Activated naive CD4-positive, alpha-beta T cell treated with anti-CD3 and anti-CD28 coated beads for 36 hours (primary cell): ENCODE measurements at regions of chr5 and their contacts with region 1.

Region 1: DNA sequence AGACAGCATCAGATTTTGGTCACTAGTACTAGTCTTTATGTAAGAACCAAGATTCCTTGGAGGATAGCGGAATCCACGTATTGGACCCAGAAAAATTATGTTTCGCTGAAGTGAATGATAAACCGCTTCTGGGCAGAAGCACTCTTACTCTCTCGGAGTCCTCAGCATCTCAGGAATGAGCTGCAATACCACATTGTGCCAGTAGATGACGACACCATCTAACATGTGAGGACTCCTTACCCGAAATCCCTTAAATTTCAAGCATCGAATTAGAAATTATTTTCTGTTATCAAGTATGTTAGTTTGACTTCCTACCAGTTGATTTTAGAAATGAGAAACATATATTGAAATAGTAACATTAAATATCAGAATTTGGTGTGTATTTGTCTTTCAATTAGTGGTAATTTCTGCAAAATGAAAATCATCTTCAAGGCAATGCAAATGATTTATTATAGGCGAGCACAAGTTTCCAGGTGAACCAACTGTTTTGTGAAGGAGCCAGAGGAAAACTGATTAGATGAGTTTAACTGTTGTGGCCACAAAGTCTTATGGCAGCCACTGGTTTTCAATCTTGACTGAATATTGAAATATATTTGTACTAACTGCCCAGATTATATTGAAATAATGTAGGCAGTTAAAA is 66.0 kb upstream of the CAMK4 start:
- DNase-seq: peak; percentile 93
- H3K4me3 Mint-ChIP-seq: no peak overlapping the region
- H3K27ac Mint-ChIP-seq: no peak overlapping the region
- H3K4me1 Mint-ChIP-seq: peaks cover 7% of the 10 kb centered on the region
- H3K27me3 Mint-ChIP-seq: no peaks in the 10 kb centered on the region

Region 2: DNA sequence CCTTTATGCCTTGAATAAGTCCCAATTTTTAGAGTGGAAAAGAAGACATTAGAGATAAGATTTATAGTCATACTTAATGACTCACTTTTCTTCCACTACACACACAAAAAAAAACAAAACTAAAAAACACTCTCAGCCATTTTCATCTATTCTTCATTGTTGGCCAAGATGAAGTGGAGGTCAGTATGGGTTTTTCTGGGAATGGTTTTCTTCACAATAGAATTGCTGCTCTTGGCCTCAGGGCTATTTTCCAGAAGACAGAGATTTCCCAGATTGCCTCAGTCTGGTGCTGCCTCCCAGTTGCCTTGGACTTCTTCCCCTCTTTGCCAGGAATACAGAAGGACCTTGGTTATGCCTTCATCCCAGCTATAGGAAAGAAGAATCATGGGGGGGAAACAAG is 895.5 kb before region 1 on chr5:
- CTCF ChIA-PET with region 1: no interaction called
- intact Hi-C with region 1: no loop called
- DNase-seq: no peak
- H3K4me3 Mint-ChIP-seq: no peak overlapping the region
- H3K27ac Mint-ChIP-seq: no peak overlapping the region
- H3K4me1 Mint-ChIP-seq: no peaks in the 10 kb centered on the region
- H3K27me3 Mint-ChIP-seq: no peaks in the 10 kb centered on the region

Region 3: DNA sequence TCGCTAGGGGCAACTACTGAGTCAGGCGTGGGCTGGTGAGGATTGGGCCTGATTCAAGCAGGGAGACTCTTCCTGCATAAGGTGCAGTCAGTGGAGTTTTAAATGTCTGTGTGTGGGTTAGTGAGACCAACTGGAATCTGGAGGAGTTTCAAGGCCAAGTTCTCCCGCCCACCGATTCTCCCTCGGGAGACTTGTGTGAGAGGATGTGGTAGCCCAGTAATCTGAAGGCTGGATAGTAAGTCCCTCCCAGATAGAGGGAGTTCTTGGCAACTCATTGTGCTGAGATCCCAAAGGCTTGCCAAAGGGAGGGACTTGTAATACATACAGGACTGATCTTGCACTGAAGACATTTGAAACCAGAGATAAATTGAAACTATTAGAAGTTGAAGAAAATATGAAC is 14.3 kb before region 1 on chr5:
- CTCF ChIA-PET with region 1: no interaction called
- intact Hi-C with region 1: no loop called
- DNase-seq: no peak
- H3K4me3 Mint-ChIP-seq: no peak overlapping the region
- H3K27ac Mint-ChIP-seq: no peak overlapping the region
- H3K4me1 Mint-ChIP-seq: peaks cover 6% of the 10 kb centered on the region
- H3K27me3 Mint-ChIP-seq: no peaks in the 10 kb centered on the region

Region 4: DNA sequence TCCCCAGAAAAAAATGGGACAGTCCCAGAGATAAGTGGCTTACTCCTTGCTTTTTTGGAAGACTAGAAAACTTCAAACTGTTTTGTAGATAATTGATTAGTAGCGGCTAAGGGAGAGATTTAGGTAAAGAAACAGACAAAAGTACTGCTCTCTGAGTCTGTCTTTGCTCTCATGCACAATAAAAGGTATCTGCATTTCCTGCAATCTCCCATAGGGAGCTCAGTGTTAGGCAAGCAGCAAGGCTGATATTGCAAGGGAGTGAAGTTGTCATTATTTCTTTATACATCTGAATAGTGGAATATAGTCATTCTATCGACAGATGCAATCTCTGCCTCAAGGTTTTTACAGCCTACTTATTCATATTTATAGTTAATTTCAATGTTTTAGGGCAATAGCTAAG is 11.0 kb after region 1 on chr5:
- CTCF ChIA-PET with region 1: interaction called, 18 read pairs
- intact Hi-C with region 1: no loop called
- DNase-seq: no peak
- H3K4me3 Mint-ChIP-seq: no peak overlapping the region
- H3K27ac Mint-ChIP-seq: no peak overlapping the region
- H3K4me1 Mint-ChIP-seq: peaks cover 3% of the 10 kb centered on the region
- H3K27me3 Mint-ChIP-seq: no peaks in the 10 kb centered on the region

Region 5: GRCh38 chr5:111223889-111224563 is 65.8 kb after region 1 on chr5 and contains the start of gene CAMK4:
- CTCF ChIA-PET with region 1: interaction called, 40 read pairs
- intact Hi-C with region 1: loop called (anchors 5 kb)
- DNase-seq: peak; percentile 75
- H3K4me3 Mint-ChIP-seq: peak within 1 kb of the TSS; percentile 95
- H3K27ac Mint-ChIP-seq: peak within 1 kb of the TSS; percentile 97
- H3K4me1 Mint-ChIP-seq: peaks cover 25% of the 10 kb centered on the region
- H3K27me3 Mint-ChIP-seq: no peaks in the 10 kb centered on the region
- total RNA-seq, gene CAMK4: 40.6 to 44.4 TPM

Region 6: GRCh38 chr5:111320953-111321352 is 162.7 kb after region 1 on chr5:
- CTCF ChIA-PET with region 1: no interaction called
- intact Hi-C with region 1: no loop called
- DNase-seq: no peak
- H3K4me3 Mint-ChIP-seq: no peak overlapping the region
- H3K27ac Mint-ChIP-seq: no peak overlapping the region
- H3K4me1 Mint-ChIP-seq: peaks cover 53% of the 10 kb centered on the region
- H3K27me3 Mint-ChIP-seq: no peaks in the 10 kb centered on the region

Region 7: GRCh38 chr5:111478266-111478665 is 320.0 kb after region 1 on chr5:
- CTCF ChIA-PET with region 1: interaction called, 17 read pairs
- intact Hi-C with region 1: loop called (anchors 1 kb)
- DNase-seq: no peak
- H3K4me3 Mint-ChIP-seq: no peak overlapping the region
- H3K27ac Mint-ChIP-seq: no peak overlapping the region
- H3K4me1 Mint-ChIP-seq: no peaks in the 10 kb centered on the region
- H3K27me3 Mint-ChIP-seq: no peaks in the 10 kb centered on the region

Region 8: GRCh38 chr5:111550279-111551020 is 392.2 kb after region 1 on chr5:
- CTCF ChIA-PET with region 1: interaction called, 4 read pairs
- intact Hi-C with region 1: loop called (anchors 5 kb)
- DNase-seq: peak; percentile 88
- H3K4me3 Mint-ChIP-seq: no peak overlapping the region
- H3K27ac Mint-ChIP-seq: peak overlapping the region; percentile 31
- H3K4me1 Mint-ChIP-seq: peaks cover 27% of the 10 kb centered on the region
- H3K27me3 Mint-ChIP-seq: no peaks in the 10 kb centered on the region